IMR-90 (cell line): ENCODE measurements at regions of chr13 and their contacts with region 1.

Region 1: GRCh38 chr13:45310341-45311125 is 30.4 kb downstream of the TPT1 start:
- DNase-seq: no peak
- ATAC-seq: no peak
- H3K4me3 ChIP-seq: no peak overlapping the region
- H3K27ac ChIP-seq: no peak overlapping the region
- H3K4me1 ChIP-seq: no peaks in the 10 kb centered on the region; the same call in 1 of the 2 replicates
- H3K27me3 ChIP-seq: no peaks in the 10 kb centered on the region
- CTCF ChIP-seq: no peak
- POLR2A ChIP-seq: no peak
- RAD21 ChIP-seq: no peak

Region 2: GRCh38 chr13:45047394-45048310 is 262.9 kb before region 1 on chr13:
- CTCF ChIA-PET with region 1: interaction called, 21 read pairs
- POLR2A ChIA-PET with region 1: no interaction called
- dilution Hi-C with region 1: no loop called
- in situ Hi-C with region 1: no loop called
- intact Hi-C with region 1: loop called (anchors 1 kb)
- DNase-seq: peak; percentile 86
- ATAC-seq: peak; percentile 89
- H3K4me3 ChIP-seq: peak overlapping the region; percentile 45; the same call in 1 of the 2 replicates
- H3K27ac ChIP-seq: peak overlapping the region; percentile 67; the same call in 1 of the 2 replicates
- H3K4me1 ChIP-seq: peaks cover 6% of the 10 kb centered on the region
- H3K27me3 ChIP-seq: no peaks in the 10 kb centered on the region
- CTCF ChIP-seq: peak; percentile 98
- POLR2A ChIP-seq: peak; percentile 48; the same call in 1 of the 2 replicates
- RAD21 ChIP-seq: peak; percentile 100